ENCODE measurements at regions of chr19 and their contacts with region 1.

Region 1: GRCh38 chr19:58386576-58387337 is at the start of gene RPS5:
- DNase-seq: peak; percentile 99
- ATAC-seq: peak; percentile 88
- H3K4me3 ChIP-seq: peak within 1 kb of the TSS; percentile 83 to 98 (median 92)
- H3K27ac ChIP-seq: peak within 1 kb of the TSS; percentile 99
- H3K4me1 ChIP-seq: peaks cover 52% of the 10 kb centered on the region
- H3K27me3 ChIP-seq: no peaks in the 10 kb centered on the region; a peak in 1 of 5 replicates
- CTCF ChIP-seq: no peak
- EP300 ChIP-seq: no peak
- POLR2A ChIP-seq: peak; percentile 85 to 98
- RAD21 ChIP-seq: no peak; the same call in none of the 2 replicates
- total RNA-seq, gene RPS5: 1,544 and 1,715 TPM in 2 replicates

Region 2: GRCh38 chr19:58311345-58311865 is 75.4 kb before region 1 on chr19:
- CTCF ChIA-PET with region 1: no interaction called
- POLR2A ChIA-PET with region 1: no interaction called
- in situ Hi-C with region 1: no loop called
- intact Hi-C with region 1: no loop called
- DNase-seq: no peak
- ATAC-seq: no peak
- H3K4me3 ChIP-seq: no peak overlapping the region
- H3K27ac ChIP-seq: no peak overlapping the region
- H3K4me1 ChIP-seq: peaks cover 16% of the 10 kb centered on the region
- H3K27me3 ChIP-seq: no peaks in the 10 kb centered on the region
- CTCF ChIP-seq: no peak
- EP300 ChIP-seq: no peak
- POLR2A ChIP-seq: no peak
- RAD21 ChIP-seq: no peak

Region 3: DNA sequence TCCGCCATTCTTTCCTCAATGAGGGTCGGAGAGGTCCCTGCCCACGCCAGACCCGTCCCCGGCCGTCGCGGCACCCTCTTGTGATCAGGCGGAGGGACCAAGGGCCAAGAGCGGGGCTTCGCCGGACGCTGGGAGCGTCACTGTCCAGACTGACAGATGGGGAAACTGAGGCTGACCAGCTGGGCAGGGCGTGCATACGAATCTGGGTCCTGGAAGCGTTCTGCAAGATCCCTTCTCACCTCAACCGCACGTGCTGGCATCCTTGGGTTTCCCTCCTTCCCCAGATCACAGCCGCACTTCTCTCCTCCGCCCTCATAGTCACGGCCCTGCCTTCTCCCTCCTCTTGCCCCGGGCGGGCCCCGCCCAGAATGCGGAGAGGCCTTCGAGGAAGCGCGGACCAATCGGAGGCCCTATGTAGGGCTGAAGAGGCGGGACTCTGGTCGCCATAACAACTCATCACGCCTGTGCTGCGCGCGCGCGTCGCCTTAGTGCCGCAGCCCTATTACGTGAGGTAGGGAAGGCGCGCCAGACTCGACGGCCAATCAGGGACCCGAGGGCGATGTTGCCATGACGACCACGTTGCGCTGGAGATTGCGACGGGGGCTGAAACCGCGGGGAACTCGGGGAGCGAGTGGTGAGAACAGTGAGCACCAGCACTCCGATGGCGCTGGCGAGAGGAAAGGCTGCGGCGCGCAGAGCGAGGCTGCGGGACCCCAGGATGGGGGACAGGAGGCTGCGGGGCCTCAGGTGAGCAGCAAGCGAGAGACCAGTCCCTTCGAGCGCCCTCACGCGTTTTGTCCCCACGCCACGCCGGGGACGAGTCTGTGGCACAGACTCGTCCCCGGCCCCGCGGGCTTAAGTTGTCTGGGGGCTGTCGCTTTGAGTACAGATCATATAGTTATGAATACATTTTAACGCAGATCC is 14.4 kb after region 1 on chr19:
- CTCF ChIA-PET with region 1: no interaction called
- POLR2A ChIA-PET with region 1: no interaction called
- in situ Hi-C with region 1: no loop called
- intact Hi-C with region 1: loop called (anchors 2 kb)
- DNase-seq: peak; percentile 98
- ATAC-seq: peak; percentile 90
- H3K4me3 ChIP-seq: peak overlapping the region; percentile 68 to 85 (median 73)
- H3K27ac ChIP-seq: peak overlapping the region; percentile 58
- H3K4me1 ChIP-seq: peaks cover 44% of the 10 kb centered on the region
- H3K27me3 ChIP-seq: no peaks in the 10 kb centered on the region
- CTCF ChIP-seq: 0 out of 2 replicates have a peak, but pooled peaks have one; percentile 2
- EP300 ChIP-seq: peak in 1 of 2 experiments; percentile 20; a peak in 2 of 4 replicates
- POLR2A ChIP-seq: peak; percentile 76 to 90
- RAD21 ChIP-seq: peak; percentile 7; the same call in 1 of the 2 replicates

Measured in HepG2 (cell line).